Left ventricle myocardium inferior (tissue), 1 donor: ENCODE measurements at regions of chr7 and their contacts with region 1.

Region 1: DNA sequence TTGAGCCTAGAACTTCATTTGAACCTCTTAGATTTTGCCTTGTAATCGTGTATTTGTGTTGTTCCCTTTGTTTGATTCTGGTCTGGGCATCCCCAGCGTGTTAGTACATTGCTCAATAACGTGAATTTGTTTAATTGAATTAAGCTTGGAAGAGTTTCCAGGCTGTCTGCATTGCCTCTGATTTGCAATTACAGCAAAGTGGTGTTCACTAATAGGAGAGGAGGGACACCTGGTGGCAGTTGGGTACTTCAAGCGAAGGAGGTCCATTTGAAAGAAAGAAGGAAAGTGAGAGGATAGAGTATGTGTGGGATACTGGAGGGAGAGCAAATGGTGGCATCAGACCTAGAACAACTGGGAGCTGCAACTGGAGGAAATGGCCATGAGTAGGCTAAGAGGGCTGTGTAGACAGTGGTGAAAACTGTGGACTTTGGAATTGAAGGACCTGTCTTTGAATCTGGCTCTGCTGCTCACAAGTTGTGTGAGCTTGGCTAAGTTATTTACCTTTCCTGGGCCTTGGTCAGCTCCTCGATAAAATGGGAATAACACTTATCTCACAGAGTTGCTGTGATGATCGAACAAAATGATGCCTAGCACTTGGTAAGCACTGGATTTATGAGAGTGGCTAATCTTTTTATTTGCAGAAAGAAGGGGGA is 15.1 kb downstream of the LSMEM1 start:
- DNase-seq: peak; percentile 20
- H3K4me3 ChIP-seq: no peak overlapping the region
- H3K27ac ChIP-seq: no peak overlapping the region
- H3K4me1 ChIP-seq: peaks cover 7% of the 10 kb centered on the region
- H3K27me3 ChIP-seq: no peaks in the 10 kb centered on the region
- CTCF ChIP-seq: peak; percentile 77

Region 2: DNA sequence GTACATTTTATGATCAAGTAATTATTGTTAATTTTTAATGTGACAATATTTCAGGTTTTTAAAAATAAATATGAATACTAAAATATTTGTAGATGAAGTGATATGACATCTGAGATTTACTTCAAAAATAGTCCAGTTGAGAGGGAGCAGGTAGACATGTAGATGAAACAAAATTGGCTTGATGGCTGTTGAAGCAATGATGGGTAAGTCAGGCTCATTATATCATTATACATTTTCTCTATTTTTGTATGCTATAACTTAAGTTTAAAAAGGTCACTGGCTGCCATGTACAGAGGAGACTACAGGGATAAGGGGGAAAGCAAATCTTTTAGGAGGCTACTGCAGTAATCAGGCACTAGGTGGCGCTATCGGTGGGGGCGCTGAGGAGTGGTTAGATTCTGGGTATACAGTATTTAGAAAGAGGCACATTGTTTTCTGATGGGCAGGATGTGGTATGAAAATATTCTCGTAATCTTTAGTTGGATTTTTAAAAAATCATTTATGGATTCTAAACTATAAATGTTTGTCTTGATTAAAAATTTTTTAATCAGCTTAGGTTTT is 743.8 kb before region 1 on chr7:
- intact Hi-C with region 1: loop called (anchors 10 kb)
- DNase-seq: peak; percentile 35
- H3K4me3 ChIP-seq: no peak overlapping the region
- H3K27ac ChIP-seq: no peak overlapping the region
- H3K4me1 ChIP-seq: no peaks in the 10 kb centered on the region
- H3K27me3 ChIP-seq: no peaks in the 10 kb centered on the region
- CTCF ChIP-seq: peak; percentile 84

Region 3: GRCh38 chr7:112398534-112398933 is 97.4 kb before region 1 on chr7:
- intact Hi-C with region 1: no loop called
- DNase-seq: no peak
- H3K4me3 ChIP-seq: no peak overlapping the region
- H3K27ac ChIP-seq: no peak overlapping the region
- H3K4me1 ChIP-seq: no peaks in the 10 kb centered on the region
- H3K27me3 ChIP-seq: no peaks in the 10 kb centered on the region
- CTCF ChIP-seq: no peak